Heart right ventricle (tissue), 16 donors: ENCODE measurements at regions of chr12 and their contacts with region 1.

Region 1: GRCh38 chr12:54368709-54369583 is 4.7 kb upstream of the GPR84 start:
- DNase-seq: peak; percentile 91 to 93
- ATAC-seq: peak; percentile 59 to 85 (median 71)
- H3K4me3 ChIP-seq: peak overlapping the region; percentile 18 to 60 (median 48)
- H3K27ac ChIP-seq: peak overlapping the region in 8 of 10 donors; percentile 62 to 86 (median 76)
- H3K4me1 ChIP-seq: peaks cover 11 to 74% (median 47%) of the 10 kb centered on the region in 9 donors
- H3K27me3 ChIP-seq: no peaks in the 10 kb centered on the region
- CTCF ChIP-seq: peak; percentile 62 to 90 (median 83)

Region 2: DNA sequence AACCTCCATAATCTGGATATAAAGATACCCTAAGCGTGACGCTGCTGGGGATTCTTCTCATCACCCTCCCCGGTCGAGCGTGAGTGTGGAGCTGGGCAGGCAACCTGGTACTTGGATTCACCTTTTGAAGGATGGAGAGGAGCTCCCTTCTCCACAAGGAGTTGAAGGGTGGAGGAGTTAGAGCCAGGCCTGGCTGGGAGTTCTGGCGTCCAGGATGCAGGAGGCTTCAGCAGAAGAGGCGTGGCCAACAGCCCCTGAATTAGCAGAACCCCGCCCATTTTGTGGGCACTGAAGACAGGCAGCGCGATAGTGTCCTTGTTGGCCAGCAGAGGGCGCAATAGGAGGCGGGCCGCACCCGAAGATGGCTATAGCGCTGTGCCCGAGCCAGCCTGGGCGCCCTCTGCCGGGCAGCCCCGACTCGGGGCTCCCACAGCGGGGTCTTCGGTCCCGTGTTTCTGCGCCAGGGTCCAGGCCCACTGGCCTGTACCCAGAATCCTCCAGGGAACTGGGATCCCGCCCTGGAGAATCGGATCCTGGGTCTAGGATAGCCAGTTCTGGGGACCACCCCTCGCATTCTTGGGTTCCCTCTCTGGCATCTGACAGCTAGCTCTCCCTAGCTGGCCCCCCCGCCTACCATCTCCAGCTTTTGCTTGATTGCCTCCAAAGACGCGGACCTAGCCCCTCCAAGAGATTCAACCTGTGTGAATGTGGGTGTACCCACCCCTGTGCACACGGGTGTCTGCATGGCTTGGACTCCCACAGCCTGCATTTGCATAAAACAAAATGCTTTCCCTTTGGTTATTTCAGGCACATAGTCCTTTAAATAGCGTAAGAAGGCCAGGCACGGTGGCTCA is 154.2 kb before region 1 on chr12:
- intact Hi-C with region 1: loop called in 3 of 10 experiments (anchors 2 to 5 kb)
- DNase-seq: peak; percentile 82 to 87
- ATAC-seq: peak; percentile 79 to 92 (median 88)
- H3K4me3 ChIP-seq: peak overlapping the region in 7 of 10 donors; percentile 7 to 36 (median 23)
- H3K27ac ChIP-seq: no peak overlapping the region
- H3K4me1 ChIP-seq: peaks cover 2 to 40% (median 24%) of the 10 kb centered on the region in 9 donors
- H3K27me3 ChIP-seq: peaks cover 0 to 85% (median 37%) of the 10 kb centered on the region in 7 donors
- CTCF ChIP-seq: peak; percentile 91 to 100 (median 98)

Region 3: GRCh38 chr12:54220092-54220557 is 148.8 kb before region 1 on chr12:
- intact Hi-C with region 1: loop called in 9 of 10 experiments (anchors 2 to 10 kb)
- DNase-seq: peak; percentile 54 to 64
- ATAC-seq: peak; percentile 14 to 77 (median 55)
- H3K4me3 ChIP-seq: no peak overlapping the region
- H3K27ac ChIP-seq: no peak overlapping the region
- H3K4me1 ChIP-seq: peaks cover 0 to 38% (median 24%) of the 10 kb centered on the region in 9 donors
- H3K27me3 ChIP-seq: peaks cover 0 to 36% (median 9%) of the 10 kb centered on the region in 7 donors
- CTCF ChIP-seq: peak; percentile 59 to 82 (median 76)

Region 4: DNA sequence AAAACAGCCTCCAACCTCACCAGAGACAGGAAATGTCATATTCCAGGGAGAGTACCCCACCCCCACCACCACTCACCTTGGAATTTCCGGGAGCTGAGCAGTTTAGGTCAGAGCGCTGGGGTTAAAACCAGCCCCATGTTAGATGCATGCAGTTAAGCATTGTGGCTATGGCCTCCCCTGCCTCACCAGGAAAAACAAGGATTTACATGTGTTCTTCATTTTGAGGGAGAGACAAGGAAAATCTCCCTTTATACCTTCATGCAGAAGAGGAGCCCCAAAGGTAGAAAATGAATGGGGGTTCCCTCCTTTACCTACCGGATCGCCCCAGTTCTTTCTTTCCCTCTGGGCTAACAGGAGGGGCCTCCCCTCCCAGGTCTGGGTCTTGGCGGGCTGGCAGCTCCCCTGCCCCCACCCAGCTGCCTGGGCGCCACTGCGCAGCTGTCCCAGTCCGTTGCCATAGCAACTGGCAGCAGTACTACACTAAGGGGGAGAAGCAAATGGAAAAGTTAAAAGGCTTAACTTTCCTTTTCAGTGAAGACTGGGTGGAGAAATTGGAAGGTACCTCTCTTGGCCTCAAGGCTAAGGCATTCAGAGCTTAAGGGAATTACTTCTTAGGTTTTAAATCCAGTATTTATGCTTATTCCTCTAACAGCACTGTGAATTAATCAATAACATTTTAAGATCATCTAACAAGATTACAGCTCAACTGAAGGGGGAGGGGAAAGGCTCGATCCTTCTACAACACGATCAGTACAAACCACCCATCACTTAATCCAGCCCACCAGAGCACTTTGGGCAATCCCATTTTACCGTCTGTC is 109.5 kb before region 1 on chr12:
- intact Hi-C with region 1: loop called in 5 of 10 experiments (anchors 10 kb)
- DNase-seq: peak; percentile 60 to 82
- ATAC-seq: peak; percentile 89 to 97 (median 95)
- H3K4me3 ChIP-seq: peak overlapping the region; percentile 19 to 65 (median 51)
- H3K27ac ChIP-seq: peak overlapping the region; percentile 66 to 93 (median 80)
- H3K4me1 ChIP-seq: peaks cover 7 to 61% (median 47%) of the 10 kb centered on the region in 9 donors
- H3K27me3 ChIP-seq: no peaks in the 10 kb centered on the region
- CTCF ChIP-seq: no peak

Region 5: GRCh38 chr12:54279866-54280467 is 89.0 kb before region 1 on chr12 and contains the start of gene CBX5:
- intact Hi-C with region 1: loop called in 2 of 10 experiments (anchors 5 to 10 kb)
- DNase-seq: peak; percentile 98 to 100
- ATAC-seq: peak; percentile 76 to 91 (median 82)
- H3K4me3 ChIP-seq: peak within 1 kb of the TSS; percentile 50 to 88 (median 74)
- H3K27ac ChIP-seq: peak within 1 kb of the TSS; percentile 84 to 95 (median 92)
- H3K4me1 ChIP-seq: peaks cover 12 to 63% (median 52%) of the 10 kb centered on the region in 9 donors
- H3K27me3 ChIP-seq: no peaks in the 10 kb centered on the region
- CTCF ChIP-seq: no peak
- total RNA-seq, gene CBX5: 44.4 to 53.5 (median 49.7) TPM

Region 6: GRCh38 chr12:54294152-54294952 is 74.6 kb before region 1 on chr12:
- intact Hi-C with region 1: loop called in 8 of 10 experiments (anchors 5 to 10 kb)
- DNase-seq: peak in 1 of 2 donors; percentile 58
- ATAC-seq: peak in 7 of 8 donors; percentile 32 to 70 (median 59)
- H3K4me3 ChIP-seq: peak overlapping the region in 1 of 10 donors; percentile 20
- H3K27ac ChIP-seq: peak overlapping the region in 1 of 10 donors; percentile 38
- H3K4me1 ChIP-seq: peaks cover 0 to 8% (median 0%) of the 10 kb centered on the region in 9 donors
- H3K27me3 ChIP-seq: peaks cover 4 to 13% (median 9%) of the 10 kb centered on the region in 7 donors
- CTCF ChIP-seq: peak in 8 of 9 donors; percentile 10 to 75 (median 63)

Region 7: GRCh38 chr12:54479421-54479820 is 110.5 kb after region 1 on chr12:
- intact Hi-C with region 1: no loop called
- DNase-seq: no peak
- ATAC-seq: no peak
- H3K4me3 ChIP-seq: no peak overlapping the region
- H3K27ac ChIP-seq: no peak overlapping the region
- H3K4me1 ChIP-seq: no peaks in the 10 kb centered on the region
- H3K27me3 ChIP-seq: peaks cover 0 to 22% (median 5%) of the 10 kb centered on the region in 7 donors
- CTCF ChIP-seq: no peak